ENCODE measurements at regions of chr4 and their contacts with region 1.

Region 1: DNA sequence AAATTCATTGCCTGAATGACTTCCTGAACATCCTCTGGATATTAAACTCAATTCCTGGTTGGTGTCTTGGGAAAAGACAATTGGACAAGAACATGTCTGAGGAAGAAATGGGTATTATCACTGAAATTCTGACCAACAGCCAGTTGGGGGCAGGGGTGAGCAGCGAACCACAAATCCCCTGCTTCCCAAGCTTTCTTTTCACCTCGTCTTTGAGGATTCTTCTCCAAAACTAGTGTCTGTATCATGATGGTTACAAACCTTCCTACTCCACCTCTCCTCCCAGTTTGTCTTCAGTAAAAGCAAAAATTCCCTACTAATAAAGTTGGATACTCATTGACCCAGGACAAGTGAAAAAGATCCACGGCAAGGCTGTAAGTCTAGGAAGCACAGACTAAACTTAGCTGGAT is 48.3 kb upstream of the WDR1 start:
- DNase-seq: no peak
- H3K4me3 ChIP-seq: no peak overlapping the region
- H3K27ac ChIP-seq: no peak overlapping the region
- H3K4me1 ChIP-seq: no peaks in the 10 kb centered on the region
- CTCF ChIP-seq: peak; percentile 76

Region 2: GRCh38 chr4:10535912-10536311 is 371.0 kb after region 1 on chr4:
- CTCF ChIA-PET with region 1: no interaction called
- POLR2A ChIA-PET with region 1: no interaction called
- intact Hi-C with region 1: loop called (anchors 2 kb)
- DNase-seq: no peak
- H3K4me3 ChIP-seq: no peak overlapping the region
- H3K27ac ChIP-seq: no peak overlapping the region
- H3K4me1 ChIP-seq: no peaks in the 10 kb centered on the region
- CTCF ChIP-seq: no peak

Region 3: DNA sequence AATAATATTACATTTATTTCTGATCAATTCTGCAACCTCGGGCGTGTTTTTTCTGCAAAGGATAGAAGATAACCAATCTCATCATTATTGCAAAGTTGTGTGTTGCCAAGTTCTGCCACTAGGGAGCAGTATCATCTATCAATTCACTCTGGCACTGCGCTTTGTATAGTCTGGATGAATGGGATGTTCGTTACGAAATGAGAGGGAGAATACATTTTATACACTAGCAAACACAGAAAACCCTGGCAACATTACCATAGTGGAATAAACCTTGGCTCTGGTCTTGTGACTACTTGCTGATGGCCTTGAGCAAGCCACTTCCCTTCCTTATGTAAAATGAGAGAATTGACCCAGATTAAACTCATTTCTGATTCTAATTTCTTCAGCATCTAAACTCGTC is 389.8 kb after region 1 on chr4:
- CTCF ChIA-PET with region 1: no interaction called
- POLR2A ChIA-PET with region 1: no interaction called
- intact Hi-C with region 1: loop called (anchors 2 kb)
- DNase-seq: peak; percentile 54
- H3K4me3 ChIP-seq: no peak overlapping the region
- H3K27ac ChIP-seq: no peak overlapping the region
- H3K4me1 ChIP-seq: no peaks in the 10 kb centered on the region
- CTCF ChIP-seq: peak; percentile 95

Region 4: GRCh38 chr4:10605746-10606482 is 441.0 kb after region 1 on chr4:
- CTCF ChIA-PET with region 1: no interaction called
- POLR2A ChIA-PET with region 1: no interaction called
- intact Hi-C with region 1: no loop called
- DNase-seq: no peak
- H3K4me3 ChIP-seq: no peak overlapping the region
- H3K27ac ChIP-seq: no peak overlapping the region
- H3K4me1 ChIP-seq: no peaks in the 10 kb centered on the region
- CTCF ChIP-seq: no peak

Region 5: DNA sequence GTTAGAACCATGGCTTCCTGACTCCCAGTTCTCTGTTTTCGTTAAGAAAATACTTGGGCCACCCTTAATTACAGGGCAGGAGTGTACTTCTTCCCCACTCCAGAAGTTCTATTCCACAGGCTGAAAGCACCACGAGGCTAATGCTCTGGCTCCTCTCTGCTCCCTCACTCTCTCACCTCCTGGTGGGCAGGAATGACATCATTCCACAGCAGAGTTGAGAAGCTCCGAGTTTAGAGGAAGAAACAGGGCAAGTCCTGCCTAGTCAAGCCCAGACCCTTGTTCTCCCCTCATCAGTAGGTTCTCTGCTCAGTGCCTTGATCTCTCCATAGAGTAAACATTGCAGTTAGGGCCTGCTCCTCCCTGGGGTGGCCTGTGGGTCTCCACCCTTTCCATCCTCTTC is 863.5 kb after region 1 on chr4:
- CTCF ChIA-PET with region 1: no interaction called
- POLR2A ChIA-PET with region 1: no interaction called
- intact Hi-C with region 1: no loop called
- DNase-seq: no peak
- H3K4me3 ChIP-seq: no peak overlapping the region
- H3K27ac ChIP-seq: no peak overlapping the region
- H3K4me1 ChIP-seq: no peaks in the 10 kb centered on the region
- CTCF ChIP-seq: no peak